ENCODE measurements at regions of chr20 and their contacts with region 1.

Region 1: GRCh38 chr20:42740226-42740870 is 449.4 kb downstream of the PTPRT start:
- DNase-seq: no peak
- H3K4me3 ChIP-seq: no peak overlapping the region
- H3K27ac ChIP-seq: no peak overlapping the region
- H3K4me1 ChIP-seq: no peaks in the 10 kb centered on the region
- H3K27me3 ChIP-seq: no peaks in the 10 kb centered on the region
- CTCF ChIP-seq: no peak

Region 2: GRCh38 chr20:42598581-42598980 is 141.8 kb before region 1 on chr20:
- CTCF ChIA-PET with region 1: no interaction called
- dilution Hi-C with region 1: no loop called
- in situ Hi-C with region 1: no loop called
- intact Hi-C with region 1: no loop called
- DNase-seq: no peak
- H3K4me3 ChIP-seq: no peak overlapping the region
- H3K27ac ChIP-seq: no peak overlapping the region
- H3K4me1 ChIP-seq: no peaks in the 10 kb centered on the region
- H3K27me3 ChIP-seq: no peaks in the 10 kb centered on the region
- CTCF ChIP-seq: no peak

Region 3: GRCh38 chr20:42836339-42836738 is 96.0 kb after region 1 on chr20:
- CTCF ChIA-PET with region 1: no interaction called
- dilution Hi-C with region 1: no loop called
- in situ Hi-C with region 1: loop called in 1 of 2 experiments (anchors 25 kb)
- intact Hi-C with region 1: no loop called
- DNase-seq: no peak
- H3K4me3 ChIP-seq: no peak overlapping the region
- H3K27ac ChIP-seq: no peak overlapping the region
- H3K4me1 ChIP-seq: no peaks in the 10 kb centered on the region
- H3K27me3 ChIP-seq: no peaks in the 10 kb centered on the region
- CTCF ChIP-seq: no peak

Measured in mammary epithelial cell (primary cell).